ENCODE measurements at regions of chr10 and their contacts with region 1.

Region 1: DNA sequence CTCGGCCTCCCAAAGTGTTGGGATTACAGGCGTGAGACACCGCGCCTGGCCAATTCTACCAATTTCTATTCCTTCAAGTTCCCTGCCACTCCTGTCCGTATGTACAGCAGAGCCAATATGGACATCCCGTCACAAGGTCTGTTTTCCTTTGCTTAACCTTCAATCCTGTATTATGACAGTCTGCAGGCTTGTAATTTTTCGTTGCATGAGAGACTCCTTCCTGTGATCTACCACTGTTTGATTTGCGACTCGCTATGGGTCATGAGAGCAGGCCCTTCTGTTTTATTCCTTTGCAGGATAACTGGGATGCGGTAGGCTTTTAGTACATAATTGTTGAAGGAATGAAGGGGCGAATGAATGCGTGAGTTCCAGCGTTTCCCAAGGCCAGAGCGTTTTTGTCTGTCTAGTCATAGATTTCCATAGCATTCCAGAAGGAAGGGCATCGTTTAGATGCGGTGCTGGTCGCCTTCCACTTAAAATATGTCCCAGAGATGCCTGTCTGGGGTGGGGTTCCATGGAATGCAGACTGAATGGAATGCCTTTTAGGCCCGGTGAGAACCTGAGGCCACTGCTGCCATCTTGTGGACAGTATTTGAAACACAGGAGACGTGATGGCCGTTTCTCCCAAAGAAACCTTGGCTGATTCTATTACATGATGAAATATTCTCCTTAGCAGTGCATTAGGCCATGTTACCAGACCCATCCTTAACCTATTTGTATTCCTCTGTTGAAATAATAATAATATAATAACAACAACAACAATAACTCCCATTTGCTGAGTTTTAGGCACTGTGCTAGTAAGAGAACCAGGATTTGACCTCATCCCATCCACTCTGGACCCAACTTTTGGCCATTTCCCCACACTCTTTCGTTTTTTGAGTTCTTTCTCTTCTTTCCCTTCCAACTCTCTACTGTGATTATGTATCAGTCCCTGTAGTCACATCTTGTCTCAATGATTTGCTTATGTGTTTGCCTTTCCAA is 193.2 kb downstream of the MYOF start:
- DNase-seq: peak; percentile 51
- H3K4me3 ChIP-seq: no peak overlapping the region
- H3K27ac ChIP-seq: no peak overlapping the region
- H3K4me1 ChIP-seq: no peaks in the 10 kb centered on the region
- CTCF ChIP-seq: peak; percentile 85

Region 2: DNA sequence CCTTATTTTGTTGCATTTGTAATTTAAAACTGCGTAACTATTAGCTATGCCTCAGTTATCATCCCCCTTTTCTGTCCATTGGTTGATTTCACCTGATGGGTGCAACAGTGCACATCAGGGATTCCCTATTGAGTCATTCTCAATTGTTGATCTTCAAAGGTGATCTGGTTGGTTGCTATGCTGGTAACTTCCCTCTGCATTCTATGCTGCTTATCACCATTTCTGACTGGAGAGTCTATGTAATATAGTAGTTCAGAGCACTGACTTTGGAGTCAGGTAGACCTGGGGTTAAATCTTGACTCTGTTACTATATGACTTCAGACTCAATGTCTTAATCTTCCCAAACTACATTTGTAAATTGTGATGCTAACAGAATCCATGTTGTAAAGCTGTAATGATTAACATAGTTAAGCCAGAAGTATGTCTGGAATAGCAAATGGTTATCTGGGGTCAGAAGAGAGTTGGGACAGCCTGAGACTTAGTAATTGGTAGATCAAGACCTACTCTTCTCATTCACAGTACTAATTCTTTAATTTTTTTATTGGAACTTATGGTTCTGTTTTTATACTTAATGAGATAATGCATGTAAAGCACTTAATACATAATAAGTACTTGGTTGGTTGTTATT is 402.5 kb before region 1 on chr10:
- CTCF ChIA-PET with region 1: no interaction called
- POLR2A ChIA-PET with region 1: no interaction called
- intact Hi-C with region 1: loop called (anchors 5 kb)
- DNase-seq: no peak
- H3K4me3 ChIP-seq: no peak overlapping the region
- H3K27ac ChIP-seq: no peak overlapping the region
- H3K4me1 ChIP-seq: no peaks in the 10 kb centered on the region
- CTCF ChIP-seq: no peak

Region 3: DNA sequence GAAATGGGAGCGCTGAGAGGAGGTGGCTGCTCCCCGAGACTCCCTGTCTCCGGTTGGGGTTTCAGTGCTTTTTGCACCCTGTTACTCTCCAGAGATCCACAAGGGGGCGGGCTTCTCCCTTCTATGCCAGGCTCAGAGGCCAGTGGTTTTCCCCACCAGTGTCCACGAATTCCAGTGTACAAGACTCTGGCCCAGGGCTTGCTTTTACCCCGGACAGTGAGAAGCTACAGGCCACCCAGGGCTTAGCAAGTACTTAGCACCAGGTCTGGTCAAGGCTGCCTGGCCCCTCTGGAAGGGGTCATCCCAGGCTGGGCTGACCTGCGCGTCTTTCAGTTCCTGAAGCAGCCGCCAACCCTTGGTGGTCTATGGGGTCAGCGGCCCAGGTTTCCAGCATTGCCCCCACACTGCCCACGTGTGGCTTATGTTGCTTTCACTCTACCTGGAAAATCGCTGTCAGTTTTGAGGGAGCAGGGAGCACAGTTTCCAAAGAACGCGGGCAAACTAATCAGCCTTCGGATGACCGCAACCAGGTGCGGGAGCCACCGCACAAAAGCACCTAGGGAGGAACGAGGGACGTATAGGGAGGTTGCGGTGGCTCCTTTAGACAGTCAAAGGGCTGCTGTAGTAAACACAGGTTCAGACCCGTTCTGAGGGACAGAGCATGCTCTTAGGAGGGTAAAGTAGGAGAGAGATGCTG is 208.4 kb before region 1 on chr10:
- CTCF ChIA-PET with region 1: no interaction called
- POLR2A ChIA-PET with region 1: no interaction called
- intact Hi-C with region 1: loop called (anchors 1 kb)
- DNase-seq: peak; percentile 43
- H3K4me3 ChIP-seq: no peak overlapping the region
- H3K27ac ChIP-seq: no peak overlapping the region
- H3K4me1 ChIP-seq: no peaks in the 10 kb centered on the region
- CTCF ChIP-seq: peak; percentile 90

Region 4: DNA sequence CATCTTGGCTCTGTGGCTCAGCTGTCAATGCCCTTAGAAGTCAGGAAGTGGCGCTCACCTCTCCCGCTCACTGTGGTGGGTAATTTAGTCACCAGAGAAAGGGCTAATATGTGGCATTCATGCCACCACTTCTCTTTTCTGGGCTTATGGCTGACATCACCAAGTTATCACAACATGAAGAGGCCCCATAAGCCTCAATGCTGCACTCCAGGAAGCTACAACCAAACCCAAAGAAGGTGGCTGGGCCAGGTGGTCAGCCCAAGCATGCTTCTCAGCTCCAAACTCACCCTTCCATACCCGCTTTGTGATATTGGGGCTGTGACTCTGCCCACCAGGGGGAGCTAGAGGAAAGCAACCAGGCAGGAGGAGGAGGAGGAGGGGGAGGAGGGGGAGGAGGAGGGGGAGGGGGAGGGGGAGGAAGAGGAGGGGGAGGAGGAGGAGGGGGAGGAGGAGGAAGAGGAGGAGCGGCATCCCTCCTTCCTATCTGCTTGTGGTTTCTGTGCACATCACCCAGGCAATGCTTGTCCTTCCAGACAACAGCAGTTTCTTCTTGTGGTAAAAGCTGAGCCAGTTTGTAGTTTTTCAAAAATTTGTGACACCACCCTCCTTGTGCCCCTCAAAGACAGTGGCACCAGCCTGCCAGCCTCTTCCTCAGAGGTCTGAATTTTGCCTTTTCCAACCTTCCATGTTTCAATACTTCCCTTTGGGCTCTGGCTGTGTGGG is 173.1 kb before region 1 on chr10:
- CTCF ChIA-PET with region 1: no interaction called
- POLR2A ChIA-PET with region 1: no interaction called
- intact Hi-C with region 1: loop called (anchors 1 kb)
- DNase-seq: peak; percentile 74
- H3K4me3 ChIP-seq: no peak overlapping the region
- H3K27ac ChIP-seq: no peak overlapping the region
- H3K4me1 ChIP-seq: peaks cover 5% of the 10 kb centered on the region
- CTCF ChIP-seq: peak; percentile 70

Region 5: GRCh38 chr10:93346694-93347093 is 57.8 kb after region 1 on chr10:
- CTCF ChIA-PET with region 1: no interaction called
- POLR2A ChIA-PET with region 1: no interaction called
- intact Hi-C with region 1: no loop called
- DNase-seq: no peak
- H3K4me3 ChIP-seq: no peak overlapping the region
- H3K27ac ChIP-seq: no peak overlapping the region
- H3K4me1 ChIP-seq: no peaks in the 10 kb centered on the region
- CTCF ChIP-seq: no peak